Activated B cell treated with CpG ODN at 0.5 μM for 24 hours (primary cell): ENCODE measurements at regions of chr11 and their contacts with region 1.

Region 1: GRCh38 chr11:62726915-62727763 is at the start of gene HNRNPUL2:
- DNase-seq: peak; percentile 97
- ATAC-seq: peak; percentile 84
- H3K4me3 Mint-ChIP-seq: peak within 1 kb of the TSS; percentile 98
- H3K27ac Mint-ChIP-seq: peak within 1 kb of the TSS; percentile 98
- H3K4me1 Mint-ChIP-seq: peaks cover 55% of the 10 kb centered on the region
- H3K27me3 Mint-ChIP-seq: no peaks in the 10 kb centered on the region
- CTCF ChIP-seq: no peak
- total RNA-seq, gene HNRNPUL2: 58.2 and 63.9 TPM in 2 replicates

Region 2: GRCh38 chr11:62601394-62602140 is 125.6 kb before region 1 on chr11 and contains the start of gene MTA2:
- CTCF ChIA-PET with region 1: no interaction called
- POLR2A ChIA-PET with region 1: interaction called, 16 read pairs
- intact Hi-C with region 1: no loop called
- DNase-seq: peak; percentile 100
- ATAC-seq: peak; percentile 81
- H3K4me3 Mint-ChIP-seq: peak within 1 kb of the TSS; percentile 92
- H3K27ac Mint-ChIP-seq: peak within 1 kb of the TSS; percentile 97
- H3K4me1 Mint-ChIP-seq: peaks cover 45% of the 10 kb centered on the region
- H3K27me3 Mint-ChIP-seq: no peaks in the 10 kb centered on the region
- CTCF ChIP-seq: no peak
- total RNA-seq, gene MTA2: 170 and 175 TPM in 2 replicates

Region 3: DNA sequence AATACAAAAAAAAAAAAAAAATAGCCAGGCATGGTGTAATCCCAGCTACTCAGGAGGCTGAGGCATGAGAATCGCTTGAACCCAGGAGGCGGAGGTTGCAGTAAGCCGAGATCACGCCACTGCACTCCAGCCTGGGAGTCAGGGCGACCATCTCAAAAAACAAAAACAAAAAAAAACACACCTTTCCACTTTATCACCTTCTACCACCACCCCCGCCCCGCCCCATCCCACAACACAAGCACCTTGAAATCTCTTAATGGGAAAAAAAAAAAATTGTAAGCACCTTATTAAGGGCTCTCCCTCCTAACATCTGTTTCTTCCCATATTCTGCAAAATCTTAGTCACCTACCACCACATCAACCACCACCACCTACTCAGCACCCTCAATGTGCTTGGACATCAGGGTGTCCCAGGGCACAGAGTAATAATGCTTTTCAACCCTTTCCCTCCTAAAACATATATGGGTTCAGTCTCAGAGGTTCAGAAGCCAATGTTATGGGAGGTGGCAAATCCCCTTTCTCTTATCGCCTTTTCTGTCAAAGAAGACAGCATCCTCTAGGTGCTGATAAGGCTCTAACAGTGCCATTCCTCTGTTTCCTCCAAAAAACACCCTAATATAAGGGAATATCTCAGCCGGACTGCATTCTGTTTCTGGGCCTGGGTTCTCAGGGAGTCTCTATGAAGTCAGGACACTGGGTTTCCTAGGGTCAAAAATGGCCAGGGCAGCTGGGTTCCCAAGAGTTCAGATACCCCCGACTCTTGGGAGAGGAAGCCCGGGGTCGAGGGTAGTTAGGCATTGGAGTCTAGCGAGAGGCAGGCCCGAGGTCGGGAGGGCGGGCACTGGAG is 74.8 kb before region 1 on chr11:
- CTCF ChIA-PET with region 1: no interaction called
- POLR2A ChIA-PET with region 1: interaction called, 18 read pairs
- intact Hi-C with region 1: loop called (anchors 2 kb)
- DNase-seq: no peak
- ATAC-seq: no peak
- H3K4me3 Mint-ChIP-seq: peak overlapping the region; percentile 90
- H3K27ac Mint-ChIP-seq: peak overlapping the region; percentile 90
- H3K4me1 Mint-ChIP-seq: peaks cover 28% of the 10 kb centered on the region
- H3K27me3 Mint-ChIP-seq: no peaks in the 10 kb centered on the region
- CTCF ChIP-seq: no peak

Region 4: GRCh38 chr11:62678770-62679696 is 48.1 kb before region 1 on chr11 and contains the start of gene UBXN1:
- CTCF ChIA-PET with region 1: no interaction called
- POLR2A ChIA-PET with region 1: interaction called, 12 read pairs
- intact Hi-C with region 1: loop called (anchors 1 kb)
- DNase-seq: peak; percentile 77
- ATAC-seq: peak; percentile 74
- H3K4me3 Mint-ChIP-seq: peak within 1 kb of the TSS; percentile 91
- H3K27ac Mint-ChIP-seq: peak within 1 kb of the TSS; percentile 96
- H3K4me1 Mint-ChIP-seq: peaks cover 41% of the 10 kb centered on the region
- H3K27me3 Mint-ChIP-seq: no peaks in the 10 kb centered on the region
- CTCF ChIP-seq: no peak
- total RNA-seq, gene UBXN1: 204 and 205 TPM in 2 replicates

Region 5: GRCh38 chr11:62694455-62695167 is 32.5 kb before region 1 on chr11:
- CTCF ChIA-PET with region 1: no interaction called
- POLR2A ChIA-PET with region 1: no interaction called
- intact Hi-C with region 1: no loop called
- DNase-seq: peak; percentile 55
- ATAC-seq: peak; percentile 88
- H3K4me3 Mint-ChIP-seq: no peak overlapping the region
- H3K27ac Mint-ChIP-seq: no peak overlapping the region
- H3K4me1 Mint-ChIP-seq: peaks cover 5% of the 10 kb centered on the region
- H3K27me3 Mint-ChIP-seq: no peaks in the 10 kb centered on the region
- CTCF ChIP-seq: no peak

Region 6: DNA sequence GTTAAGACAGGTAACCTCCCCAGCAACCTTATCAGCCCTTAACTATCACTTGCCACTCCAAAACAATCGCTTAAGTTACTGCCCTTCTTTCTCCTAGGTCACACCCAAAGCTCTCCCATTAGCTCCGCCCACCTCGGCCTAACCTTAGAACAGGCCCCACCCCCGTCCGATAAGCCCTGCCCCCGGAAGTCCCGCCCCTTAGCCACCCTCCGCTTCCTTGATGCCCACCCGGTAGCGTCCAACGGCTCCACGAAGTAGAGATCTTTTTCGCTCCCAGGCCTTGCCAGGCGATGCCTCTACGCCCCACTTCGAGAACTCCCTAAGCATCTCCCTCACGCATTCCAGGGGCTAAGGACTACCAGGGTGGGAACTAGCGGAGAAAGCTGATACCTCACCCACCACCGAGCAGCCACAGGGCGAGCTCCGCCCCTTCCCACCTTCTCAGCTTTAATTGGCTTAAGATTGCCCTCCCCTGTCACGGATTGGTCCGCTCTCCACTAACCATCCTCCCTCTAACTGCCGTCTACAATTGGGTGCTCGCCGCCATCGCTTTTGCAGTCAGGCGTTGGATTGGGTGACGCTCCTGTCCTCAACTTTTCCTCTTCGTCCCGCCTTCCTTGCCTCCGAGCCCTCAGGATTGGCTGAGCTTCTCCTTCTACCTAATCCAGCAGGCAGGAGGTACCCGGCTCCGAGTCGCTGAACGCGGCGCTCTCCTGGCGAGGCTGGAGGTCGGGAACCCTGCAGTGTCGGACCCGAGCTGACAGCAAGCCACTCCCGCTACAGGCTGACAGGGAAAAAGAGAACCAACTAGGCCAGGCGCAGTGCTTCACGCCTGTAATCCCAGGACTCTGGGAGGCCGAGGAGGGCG is 26.8 kb after region 1 on chr11 and contains the start of gene ZBTB3:
- CTCF ChIA-PET with region 1: interaction called, 4 read pairs
- POLR2A ChIA-PET with region 1: interaction called, 193 read pairs
- intact Hi-C with region 1: loop called (anchors 1 kb)
- DNase-seq: peak; percentile 91
- ATAC-seq: peak; percentile 93
- H3K4me3 Mint-ChIP-seq: peak within 1 kb of the TSS; percentile 97
- H3K27ac Mint-ChIP-seq: peak within 1 kb of the TSS; percentile 99
- H3K4me1 Mint-ChIP-seq: peaks cover 22% of the 10 kb centered on the region
- H3K27me3 Mint-ChIP-seq: no peaks in the 10 kb centered on the region
- CTCF ChIP-seq: no peak
- total RNA-seq, gene ZBTB3: 17.6 and 19.9 TPM in 2 replicates

Region 7: GRCh38 chr11:62787005-62787759 is 60.0 kb after region 1 on chr11 and contains the start of gene TMEM179B:
- CTCF ChIA-PET with region 1: interaction called, 7 read pairs
- POLR2A ChIA-PET with region 1: interaction called, 64 read pairs
- intact Hi-C with region 1: loop called (anchors 1 kb)
- DNase-seq: peak; percentile 87
- ATAC-seq: peak; percentile 71
- H3K4me3 Mint-ChIP-seq: peak within 1 kb of the TSS; percentile 92
- H3K27ac Mint-ChIP-seq: peak within 1 kb of the TSS; percentile 89
- H3K4me1 Mint-ChIP-seq: peaks cover 42% of the 10 kb centered on the region
- H3K27me3 Mint-ChIP-seq: no peaks in the 10 kb centered on the region
- CTCF ChIP-seq: peak; percentile 66
- total RNA-seq, gene TMEM179B: 34.9 and 47.7 TPM in 2 replicates

Region 8: DNA sequence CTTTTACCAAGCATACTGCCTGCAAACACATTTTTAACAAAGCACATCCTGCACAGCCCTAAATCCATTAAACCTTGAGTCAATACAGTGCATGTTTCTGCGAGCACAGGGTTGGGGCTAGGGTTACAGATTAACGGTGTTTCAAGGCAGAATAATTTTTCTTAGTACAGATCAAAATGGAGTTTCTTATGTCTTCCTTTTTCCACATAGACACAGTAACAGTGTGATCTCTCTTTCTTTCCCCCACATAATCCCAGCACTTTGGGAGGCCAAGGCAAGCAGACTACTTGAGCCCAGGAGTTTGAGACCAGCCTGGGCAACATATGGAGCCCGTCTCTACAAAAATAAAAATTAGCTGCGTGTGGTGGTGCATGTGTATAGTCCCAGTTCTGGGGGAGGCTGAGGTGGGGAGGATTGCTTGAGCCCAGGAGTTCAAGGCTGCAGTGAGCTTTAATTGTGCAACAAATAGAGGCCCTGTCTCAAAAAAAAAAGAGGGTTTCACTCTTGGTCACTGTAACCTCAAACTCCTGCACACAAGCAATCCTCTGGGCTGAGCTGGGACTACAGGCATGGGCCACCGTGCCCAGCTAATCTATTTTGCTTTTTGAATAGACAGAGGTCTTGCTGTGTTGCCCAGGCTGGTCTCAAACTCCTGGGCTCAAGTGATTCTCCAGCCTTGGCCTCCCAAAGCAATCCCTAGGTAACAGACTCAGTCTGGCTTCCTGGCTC is 133.9 kb after region 1 on chr11:
- CTCF ChIA-PET with region 1: no interaction called
- POLR2A ChIA-PET with region 1: interaction called, 50 read pairs
- intact Hi-C with region 1: loop called (anchors 2 kb)
- DNase-seq: no peak
- ATAC-seq: no peak
- H3K4me3 Mint-ChIP-seq: no peak overlapping the region
- H3K27ac Mint-ChIP-seq: no peak overlapping the region
- H3K4me1 Mint-ChIP-seq: peaks cover 24% of the 10 kb centered on the region
- H3K27me3 Mint-ChIP-seq: no peaks in the 10 kb centered on the region
- CTCF ChIP-seq: no peak

Region 9: GRCh38 chr11:63548178-63548577 is 821.0 kb after region 1 on chr11:
- CTCF ChIA-PET with region 1: no interaction called
- POLR2A ChIA-PET with region 1: no interaction called
- intact Hi-C with region 1: no loop called
- DNase-seq: no peak
- ATAC-seq: no peak
- H3K4me3 Mint-ChIP-seq: no peak overlapping the region
- H3K27ac Mint-ChIP-seq: no peak overlapping the region
- H3K4me1 Mint-ChIP-seq: peaks cover 32% of the 10 kb centered on the region
- H3K27me3 Mint-ChIP-seq: peaks cover 6% of the 10 kb centered on the region
- CTCF ChIP-seq: no peak